GM12878 (cell line): ENCODE measurements at regions of chr13 and their contacts with region 1.

Region 1: GRCh38 chr13:41075034-41075433 is 13.7 kb downstream of the WBP4 start:
- DNase-seq: no peak
- ATAC-seq: peak; percentile 48
- H3K4me3 ChIP-seq: no peak overlapping the region
- H3K27ac ChIP-seq: no peak overlapping the region
- H3K4me1 ChIP-seq: no peaks in the 10 kb centered on the region
- H3K27me3 ChIP-seq: no peaks in the 10 kb centered on the region
- CTCF ChIP-seq: peak; percentile 36 to 66 (median 37); a peak in 5 of 6 replicates
- EP300 ChIP-seq: no peak
- POLR2A ChIP-seq: no peak
- RAD21 ChIP-seq: peak; percentile 73

Region 2: GRCh38 chr13:41193919-41194824 is 119.1 kb after region 1 on chr13 and contains the start of gene KBTBD7:
- CTCF ChIA-PET with region 1: interaction called, 17 read pairs
- POLR2A ChIA-PET with region 1: interaction called, 3 read pairs
- RAD21 ChIA-PET with region 1: interaction called, 4 read pairs
- SMC1A ChIA-PET with region 1: interaction called, 3 read pairs
- in situ Hi-C with region 1: no loop called
- intact Hi-C with region 1: no loop called
- DNase-seq: peak; percentile 67
- ATAC-seq: peak; percentile 99
- H3K4me3 ChIP-seq: peak within 1 kb of the TSS; percentile 86
- H3K27ac ChIP-seq: peak within 1 kb of the TSS; percentile 69
- H3K4me1 ChIP-seq: peaks cover 4% of the 10 kb centered on the region
- H3K27me3 ChIP-seq: no peaks in the 10 kb centered on the region
- CTCF ChIP-seq: no peak
- EP300 ChIP-seq: no peak
- POLR2A ChIP-seq: peak; percentile 76
- RAD21 ChIP-seq: no peak
- polyA plus RNA-seq, gene KBTBD7: 1.8 to 2.8 TPM

Region 3: GRCh38 chr13:41222259-41222852 is 147.3 kb after region 1 on chr13:
- CTCF ChIA-PET with region 1: interaction called, 34 read pairs
- POLR2A ChIA-PET with region 1: no interaction called
- RAD21 ChIA-PET with region 1: interaction called, 6 read pairs
- SMC1A ChIA-PET with region 1: interaction called, 4 read pairs
- in situ Hi-C with region 1: loop called (anchors 5 kb)
- intact Hi-C with region 1: loop called (anchors 1 kb)
- DNase-seq: peak; percentile 34
- ATAC-seq: peak; percentile 99
- H3K4me3 ChIP-seq: no peak overlapping the region
- H3K27ac ChIP-seq: no peak overlapping the region
- H3K4me1 ChIP-seq: no peaks in the 10 kb centered on the region
- H3K27me3 ChIP-seq: no peaks in the 10 kb centered on the region
- CTCF ChIP-seq: peak; percentile 77 to 86 (median 77)
- EP300 ChIP-seq: no peak
- POLR2A ChIP-seq: no peak
- RAD21 ChIP-seq: peak; percentile 82

Region 4: DNA sequence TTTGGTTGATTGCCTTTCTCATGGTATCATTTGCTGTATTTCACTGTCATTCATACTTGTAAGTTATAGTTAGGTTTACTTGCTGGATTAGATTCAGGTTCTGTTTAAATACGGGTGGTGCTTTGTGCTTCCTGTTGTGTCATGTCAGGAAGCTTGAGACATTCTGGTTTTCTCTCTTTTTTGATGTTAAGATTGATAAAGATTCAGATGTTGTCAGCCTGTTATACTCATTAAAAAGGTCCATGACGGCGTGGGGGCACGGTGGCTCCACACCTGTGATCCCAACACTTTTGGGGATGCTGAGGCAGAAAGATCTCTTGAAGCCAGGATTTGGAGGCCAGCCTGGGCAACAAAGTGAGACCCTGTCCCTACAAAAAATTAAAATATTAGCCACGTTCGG is 281.8 kb after region 1 on chr13:
- CTCF ChIA-PET with region 1: no interaction called
- POLR2A ChIA-PET with region 1: no interaction called
- RAD21 ChIA-PET with region 1: no interaction called
- SMC1A ChIA-PET with region 1: no interaction called
- in situ Hi-C with region 1: no loop called
- intact Hi-C with region 1: no loop called
- DNase-seq: no peak
- ATAC-seq: no peak
- H3K4me3 ChIP-seq: no peak overlapping the region
- H3K27ac ChIP-seq: no peak overlapping the region
- H3K4me1 ChIP-seq: no peaks in the 10 kb centered on the region
- H3K27me3 ChIP-seq: no peaks in the 10 kb centered on the region
- CTCF ChIP-seq: no peak
- EP300 ChIP-seq: no peak
- POLR2A ChIP-seq: no peak
- RAD21 ChIP-seq: no peak